CD8-positive, alpha-beta T cell (primary cell): ENCODE measurements at regions of chr20 and their contacts with region 1.

Region 1: DNA sequence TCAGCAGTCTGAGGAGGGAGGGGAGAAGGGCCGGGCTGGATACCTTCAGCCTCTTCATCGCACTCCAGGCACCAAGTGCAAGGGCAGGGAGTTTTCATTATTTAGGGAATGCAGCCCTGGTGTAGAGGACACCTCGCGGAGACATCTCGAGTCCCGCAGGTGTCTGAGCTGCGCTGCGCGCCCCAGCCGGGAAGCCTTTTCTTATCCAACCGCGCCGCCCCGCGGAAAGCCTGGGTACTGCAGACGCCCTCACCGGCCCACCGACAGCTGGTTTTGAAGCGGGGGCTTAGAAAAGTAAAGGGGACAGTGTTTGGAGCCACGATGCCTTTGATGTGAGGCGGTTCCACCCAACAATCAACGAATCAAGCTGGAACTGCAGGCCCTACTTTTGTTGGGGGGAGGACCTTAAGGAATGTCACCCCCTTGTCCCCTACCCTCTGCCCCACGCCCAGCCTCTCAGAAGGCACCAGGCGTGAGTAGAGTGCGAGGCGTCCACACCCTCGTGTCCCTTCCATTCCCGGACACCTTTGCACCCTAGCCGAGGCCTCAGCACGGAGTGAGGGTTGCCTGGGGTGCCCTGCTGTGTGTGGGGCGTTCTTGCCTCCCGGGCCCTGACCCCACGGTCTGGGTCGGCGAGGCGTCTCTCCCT is 8.6 kb downstream of the NKX2-2 start:
- DNase-seq: peak; percentile 61 to 88 (median 73)
- ATAC-seq: peak; percentile 83
- H3K4me3 ChIP-seq: peak overlapping the region; percentile 6 to 49
- H3K4me3 Mint-ChIP-seq: peak overlapping the region; percentile 61
- H3K27ac ChIP-seq: no peak overlapping the region
- H3K27ac Mint-ChIP-seq: no peak overlapping the region
- H3K4me1 ChIP-seq: peaks cover 26% of the 10 kb centered on the region
- H3K4me1 Mint-ChIP-seq: peaks cover 18% of the 10 kb centered on the region
- H3K27me3 ChIP-seq: peaks cover 22 to 30% of the 10 kb centered on the region in 2 experiments
- H3K27me3 Mint-ChIP-seq: peaks cover 51% of the 10 kb centered on the region
- CTCF ChIP-seq: peak; percentile 99

Region 2: DNA sequence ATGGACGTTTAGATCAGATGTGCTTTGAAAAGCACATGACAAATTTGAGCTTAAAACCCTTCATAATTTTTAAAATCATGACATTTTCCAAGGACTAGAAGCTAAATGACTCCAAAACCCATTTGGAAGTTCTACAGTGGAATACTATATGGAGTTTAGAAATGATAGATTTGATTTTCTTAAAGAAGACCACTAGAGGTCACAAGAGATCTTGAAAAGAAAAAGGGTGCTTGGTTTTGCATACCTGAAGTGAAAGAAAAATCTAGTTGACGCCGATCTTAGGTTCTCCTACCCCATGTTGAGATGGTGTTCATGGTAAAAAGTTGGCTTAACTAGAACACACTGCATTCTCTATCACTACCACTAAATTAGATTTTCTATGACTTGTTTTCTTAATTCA is 1421.5 kb before region 1 on chr20:
- CTCF ChIA-PET with region 1: no interaction called
- POLR2A ChIA-PET with region 1: no interaction called
- intact Hi-C with region 1: loop called in 1 of 2 experiments (anchors 5 kb)
- DNase-seq: peak in 2 of 9 experiments; percentile 34 to 62
- ATAC-seq: peak; percentile 65
- H3K4me3 ChIP-seq: no peak overlapping the region
- H3K4me3 Mint-ChIP-seq: peak overlapping the region; percentile 69
- H3K27ac ChIP-seq: no peak overlapping the region
- H3K27ac Mint-ChIP-seq: no peak overlapping the region
- H3K4me1 ChIP-seq: no peaks in the 10 kb centered on the region
- H3K4me1 Mint-ChIP-seq: peaks cover 8% of the 10 kb centered on the region
- H3K27me3 ChIP-seq: no peaks in the 10 kb centered on the region
- H3K27me3 Mint-ChIP-seq: peaks cover 13% of the 10 kb centered on the region
- CTCF ChIP-seq: peak; percentile 64

Region 3: DNA sequence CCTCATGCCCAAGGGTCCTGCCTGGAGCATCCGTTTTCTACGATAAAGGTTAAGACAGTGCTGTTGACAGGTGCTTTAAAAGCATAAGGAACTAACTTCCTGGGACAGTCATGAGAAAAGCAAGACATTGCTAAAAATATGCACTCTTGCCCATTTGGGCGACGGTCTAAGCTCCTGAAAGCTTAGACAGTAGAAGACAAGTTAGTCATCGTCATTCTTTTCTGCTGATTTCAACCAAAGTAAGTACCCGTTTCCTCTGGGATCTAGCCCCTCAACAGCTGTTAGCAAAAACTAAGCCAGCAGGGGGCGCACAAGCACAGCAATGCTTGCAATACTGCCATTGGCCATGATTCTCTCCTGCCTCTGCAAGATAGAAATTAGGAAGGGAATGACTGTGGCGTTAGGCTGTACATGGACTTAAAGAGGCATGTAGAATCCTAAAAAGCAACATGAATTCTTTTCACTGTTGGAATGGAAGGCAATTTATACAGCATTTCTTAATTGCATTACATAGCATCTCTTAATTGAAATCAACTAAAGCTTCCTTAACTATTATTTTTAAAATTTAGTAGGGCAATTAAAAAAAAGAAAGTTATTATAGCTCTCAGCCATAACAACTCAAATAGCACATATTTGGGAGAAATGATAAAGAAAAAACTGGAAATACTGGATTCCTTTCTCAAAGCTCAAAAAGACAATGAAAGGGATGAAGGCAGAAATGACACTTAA is 645.0 kb before region 1 on chr20:
- CTCF ChIA-PET with region 1: interaction called, 37 read pairs
- POLR2A ChIA-PET with region 1: no interaction called
- intact Hi-C with region 1: loop called in 1 of 2 experiments (anchors 1 kb)
- DNase-seq: peak; percentile 64 to 90 (median 77)
- ATAC-seq: peak; percentile 58
- H3K4me3 ChIP-seq: no peak overlapping the region
- H3K4me3 Mint-ChIP-seq: no peak overlapping the region
- H3K27ac ChIP-seq: no peak overlapping the region
- H3K27ac Mint-ChIP-seq: no peak overlapping the region
- H3K4me1 ChIP-seq: no peaks in the 10 kb centered on the region
- H3K4me1 Mint-ChIP-seq: no peaks in the 10 kb centered on the region
- H3K27me3 ChIP-seq: peaks cover 0 to 3% of the 10 kb centered on the region in 2 experiments
- H3K27me3 Mint-ChIP-seq: peaks cover 22% of the 10 kb centered on the region
- CTCF ChIP-seq: peak; percentile 82

Region 4: GRCh38 chr20:21099751-21100577 is 405.3 kb before region 1 on chr20:
- CTCF ChIA-PET with region 1: interaction called, 3 read pairs
- POLR2A ChIA-PET with region 1: no interaction called
- intact Hi-C with region 1: loop called in 1 of 2 experiments (anchors 5 kb)
- DNase-seq: peak in 6 of 9 experiments; percentile 32 to 76 (median 52)
- ATAC-seq: peak; percentile 45
- H3K4me3 ChIP-seq: peak overlapping the region; percentile 66 to 71
- H3K4me3 Mint-ChIP-seq: peak overlapping the region; percentile 84
- H3K27ac ChIP-seq: peak overlapping the region; percentile 44 to 73
- H3K27ac Mint-ChIP-seq: peak overlapping the region; percentile 71
- H3K4me1 ChIP-seq: peaks cover 43% of the 10 kb centered on the region
- H3K4me1 Mint-ChIP-seq: peaks cover 40% of the 10 kb centered on the region
- H3K27me3 ChIP-seq: peaks cover 46 to 51% of the 10 kb centered on the region in 2 experiments
- H3K27me3 Mint-ChIP-seq: peaks cover 82% of the 10 kb centered on the region
- CTCF ChIP-seq: no peak

Region 5: DNA sequence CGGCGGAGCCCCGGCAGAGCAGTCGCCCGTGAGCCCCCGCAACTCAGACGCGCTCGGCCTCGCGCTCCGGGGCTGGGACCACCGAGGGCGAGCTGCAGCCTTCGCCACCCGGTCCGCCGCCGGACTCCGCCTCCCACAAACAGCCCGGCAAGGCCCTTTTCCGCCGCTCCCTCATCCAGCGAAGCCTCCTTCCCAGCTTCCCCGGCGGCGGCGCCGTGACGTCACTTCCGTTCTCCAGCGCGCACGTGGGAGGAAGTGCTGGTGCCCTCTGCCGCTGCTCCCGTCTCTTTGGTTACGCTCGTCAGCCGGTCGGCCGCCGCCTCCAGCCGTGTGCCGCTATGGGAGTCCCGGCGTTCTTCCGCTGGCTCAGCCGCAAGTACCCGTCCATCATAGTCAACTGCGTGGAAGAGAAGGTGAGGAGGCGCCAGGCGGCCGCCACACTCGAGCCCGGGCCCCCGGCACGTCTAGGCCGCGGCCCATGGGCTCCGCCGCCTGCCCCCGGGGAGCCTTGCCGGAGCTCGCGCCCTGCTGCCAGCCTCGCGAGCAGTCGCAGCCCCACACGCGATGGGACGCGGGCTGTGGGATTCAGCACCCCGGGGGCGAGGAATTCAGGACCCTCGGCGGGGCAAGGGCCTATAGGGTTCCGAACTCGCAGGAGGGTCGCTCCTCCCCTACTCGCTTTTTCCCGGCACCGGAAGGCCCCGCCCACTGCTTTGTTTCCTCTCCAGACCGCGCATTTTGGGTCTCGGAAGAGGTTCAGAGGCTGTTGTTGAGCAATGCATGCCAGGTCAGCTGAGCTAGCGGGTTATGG is 202.0 kb before region 1 on chr20 and contains the start of gene XRN2:
- CTCF ChIA-PET with region 1: interaction called, 4 read pairs
- POLR2A ChIA-PET with region 1: no interaction called
- intact Hi-C with region 1: loop called in 1 of 2 experiments (anchors 5 kb)
- DNase-seq: peak; percentile 87 to 96 (median 95)
- ATAC-seq: peak; percentile 77
- H3K4me3 ChIP-seq: peak within 1 kb of the TSS; percentile 69 to 92
- H3K4me3 Mint-ChIP-seq: peak within 1 kb of the TSS; percentile 98
- H3K27ac ChIP-seq: peak within 1 kb of the TSS; percentile 93 to 94
- H3K27ac Mint-ChIP-seq: peak within 1 kb of the TSS; percentile 99
- H3K4me1 ChIP-seq: peaks cover 26% of the 10 kb centered on the region
- H3K4me1 Mint-ChIP-seq: peaks cover 25% of the 10 kb centered on the region
- H3K27me3 ChIP-seq: no peaks in the 10 kb centered on the region
- H3K27me3 Mint-ChIP-seq: no peaks in the 10 kb centered on the region
- CTCF ChIP-seq: no peak
- total RNA-seq, gene XRN2: 52.1 to 54.2 TPM

Region 6: DNA sequence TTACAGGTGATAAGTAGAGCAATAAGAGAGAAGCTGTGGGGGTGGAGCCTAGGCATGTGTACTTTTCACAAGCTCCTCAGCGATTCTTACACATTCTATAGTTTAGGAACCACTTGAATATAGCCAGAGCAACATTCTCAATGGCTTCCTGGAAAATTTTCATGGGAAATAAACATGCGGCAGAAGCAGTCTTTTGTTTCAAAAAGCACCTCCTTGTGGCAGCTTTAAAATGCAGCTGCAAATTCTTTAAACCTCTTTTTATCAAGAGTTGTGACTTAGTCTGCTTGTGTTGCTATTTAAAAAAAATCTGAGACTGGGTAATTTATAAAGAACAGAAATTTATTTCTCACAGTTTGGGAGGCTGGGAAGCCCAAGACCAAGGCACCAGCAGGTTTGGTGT is 15.2 kb before region 1 on chr20:
- CTCF ChIA-PET with region 1: interaction called, 23 read pairs
- POLR2A ChIA-PET with region 1: no interaction called
- intact Hi-C with region 1: no loop called
- DNase-seq: no peak
- ATAC-seq: no peak
- H3K4me3 ChIP-seq: no peak overlapping the region
- H3K4me3 Mint-ChIP-seq: no peak overlapping the region
- H3K27ac ChIP-seq: no peak overlapping the region
- H3K27ac Mint-ChIP-seq: no peak overlapping the region
- H3K4me1 ChIP-seq: no peaks in the 10 kb centered on the region
- H3K4me1 Mint-ChIP-seq: no peaks in the 10 kb centered on the region
- H3K27me3 ChIP-seq: no peaks in the 10 kb centered on the region
- H3K27me3 Mint-ChIP-seq: peaks cover 27% of the 10 kb centered on the region
- CTCF ChIP-seq: no peak